Right cardiac atrium (tissue), 5 donors: ENCODE measurements at regions of chr3 and their contacts with region 1.

Region 1: DNA sequence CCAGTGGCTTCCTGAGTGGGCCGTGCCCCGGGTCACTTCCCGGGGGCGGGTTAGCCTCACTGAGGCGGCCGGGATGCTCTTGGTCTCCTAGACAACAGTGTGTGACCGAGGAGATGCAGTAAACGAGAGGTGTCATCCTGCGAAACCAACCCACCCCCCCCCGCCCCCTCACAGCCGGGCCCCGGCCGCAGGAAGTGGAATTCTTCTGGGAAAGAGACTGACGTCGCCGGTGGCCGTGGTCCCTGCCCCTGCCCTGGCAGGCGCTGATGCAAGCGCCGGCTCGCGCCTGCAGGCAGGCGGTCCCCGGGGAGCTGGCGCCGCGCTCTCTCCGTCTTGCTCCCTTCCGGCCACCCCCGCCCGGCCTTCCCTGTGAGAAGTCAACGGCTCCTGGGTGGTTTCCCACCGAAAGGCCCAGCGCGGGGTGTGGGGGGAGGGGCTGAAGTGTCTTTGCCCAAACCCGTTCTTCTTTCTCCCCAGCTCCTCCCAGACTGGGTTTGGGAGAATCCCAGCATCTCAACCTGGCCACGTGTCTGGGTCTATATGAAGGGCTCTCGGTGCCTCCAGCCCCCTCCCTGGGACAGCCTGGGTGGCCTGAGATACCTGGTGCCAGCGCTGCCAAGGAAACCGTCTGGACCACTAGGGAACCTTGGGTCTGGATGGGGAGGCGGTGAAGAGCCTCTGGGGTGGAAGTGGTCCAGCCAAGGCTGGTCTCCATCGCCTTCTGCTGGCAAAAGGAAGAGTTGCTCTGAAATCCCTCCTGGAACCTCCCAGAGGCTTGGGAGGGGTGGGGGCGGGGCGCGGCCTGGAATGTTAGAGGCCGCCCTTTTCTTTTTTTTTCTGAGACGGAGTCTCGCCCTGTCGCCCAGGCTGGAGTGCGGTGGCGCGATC is 47.3 kb downstream of the BHLHE40 start:
- DNase-seq: peak; percentile 97
- ATAC-seq: peak; percentile 94 to 95
- H3K4me3 ChIP-seq: peak overlapping the region; percentile 39
- H3K27ac ChIP-seq: peak overlapping the region; percentile 90
- H3K4me1 ChIP-seq: no peaks in the 10 kb centered on the region
- H3K27me3 ChIP-seq: no peaks in the 10 kb centered on the region

Region 2: GRCh38 chr3:4712143-4712542 is 314.4 kb before region 1 on chr3:
- intact Hi-C with region 1: loop called in 2 of 4 experiments (anchors 5 to 10 kb)
- DNase-seq: no peak
- ATAC-seq: peak in 1 of 2 donors; percentile 13
- H3K4me3 ChIP-seq: no peak overlapping the region
- H3K27ac ChIP-seq: no peak overlapping the region
- H3K4me1 ChIP-seq: no peaks in the 10 kb centered on the region
- H3K27me3 ChIP-seq: no peaks in the 10 kb centered on the region

Region 3: DNA sequence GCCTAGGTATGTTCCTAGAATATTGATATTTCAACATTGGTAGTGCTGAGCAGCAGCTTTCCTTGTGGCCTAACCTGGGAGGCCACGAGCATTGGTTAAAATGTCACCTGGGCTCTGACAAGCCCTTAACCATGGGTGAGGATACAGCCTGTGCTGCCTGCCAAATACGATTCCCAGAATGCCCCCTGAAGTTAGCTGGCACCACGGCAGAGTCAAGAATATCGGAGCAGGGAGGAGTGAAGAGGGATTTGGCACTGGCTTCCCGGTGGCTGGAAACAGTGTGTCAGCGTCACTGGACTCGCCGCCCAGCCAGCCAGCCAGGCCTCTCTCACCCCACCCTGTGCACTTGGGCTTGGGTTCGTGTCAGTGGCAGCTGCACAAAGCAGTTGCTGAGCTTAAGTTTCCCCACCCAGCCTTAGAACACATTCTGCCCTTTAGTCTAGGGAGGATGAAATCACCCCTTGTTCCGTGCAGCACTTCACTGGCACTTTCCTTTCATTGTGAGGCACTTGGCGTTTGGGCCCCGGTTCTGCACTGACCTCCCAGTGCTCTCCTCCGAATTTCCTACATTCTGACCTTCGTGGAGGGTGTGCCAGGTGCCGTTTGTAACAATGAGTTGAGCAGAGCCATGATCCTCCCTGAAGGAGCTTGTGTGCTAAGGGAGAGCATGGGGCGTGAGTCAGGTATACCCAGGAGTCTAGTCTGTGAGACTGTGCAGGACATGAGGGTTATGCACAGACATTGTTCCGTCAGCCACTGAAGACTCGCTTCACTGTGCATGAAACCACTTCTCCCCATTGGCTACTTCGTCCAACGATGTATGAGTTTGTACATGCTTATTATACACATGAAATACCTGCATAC is 200.1 kb before region 1 on chr3:
- intact Hi-C with region 1: loop called in 1 of 4 experiments (anchors 10 kb)
- DNase-seq: peak; percentile 94 to 95 (median 95)
- ATAC-seq: peak; percentile 92 to 93
- H3K4me3 ChIP-seq: no peak overlapping the region
- H3K27ac ChIP-seq: peak overlapping the region; percentile 76
- H3K4me1 ChIP-seq: peaks cover 23% of the 10 kb centered on the region
- H3K27me3 ChIP-seq: no peaks in the 10 kb centered on the region

Region 4: DNA sequence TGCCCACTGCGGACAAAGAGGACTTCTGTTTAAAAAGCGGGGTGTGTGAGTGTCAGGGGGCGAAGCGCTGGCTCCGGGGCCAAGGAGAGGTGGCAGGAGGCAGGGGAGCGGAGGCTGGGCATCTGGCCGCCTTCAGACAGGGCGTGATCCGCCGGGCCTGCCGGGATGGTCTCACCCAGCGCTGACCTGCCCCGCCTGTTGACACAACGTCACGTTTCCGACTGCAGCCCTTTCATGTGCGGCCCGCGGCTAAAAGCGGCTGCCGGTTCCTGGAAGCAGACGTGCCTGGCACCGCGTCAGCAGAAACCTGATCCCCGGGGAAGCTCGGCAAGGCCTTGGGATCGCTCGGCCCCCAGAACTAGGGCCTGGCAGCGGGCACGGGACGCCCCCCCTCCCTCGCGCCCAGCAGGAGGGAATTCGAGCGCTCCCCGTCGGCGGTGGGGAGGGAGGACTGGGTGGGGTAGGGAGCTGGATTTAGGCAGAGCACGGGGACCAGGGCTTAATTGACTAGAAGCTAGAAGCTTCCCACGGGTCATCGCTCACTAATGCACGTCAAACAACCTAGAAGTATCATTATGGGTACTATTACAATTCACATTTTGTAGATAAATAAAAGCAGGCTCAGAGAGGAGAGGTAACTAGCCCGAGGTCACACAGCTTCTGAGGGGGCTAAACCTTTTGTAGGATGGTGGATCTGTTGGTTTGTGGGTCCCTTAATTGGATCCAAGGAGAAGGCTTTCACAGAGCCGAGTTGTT is 39.6 kb before region 1 on chr3:
- intact Hi-C with region 1: loop called in 3 of 4 experiments (anchors 5 kb)
- DNase-seq: peak; percentile 98 to 99 (median 98)
- ATAC-seq: peak; percentile 93
- H3K4me3 ChIP-seq: peak overlapping the region; percentile 17
- H3K27ac ChIP-seq: peak overlapping the region; percentile 96
- H3K4me1 ChIP-seq: peaks cover 7% of the 10 kb centered on the region
- H3K27me3 ChIP-seq: no peaks in the 10 kb centered on the region

Region 5: DNA sequence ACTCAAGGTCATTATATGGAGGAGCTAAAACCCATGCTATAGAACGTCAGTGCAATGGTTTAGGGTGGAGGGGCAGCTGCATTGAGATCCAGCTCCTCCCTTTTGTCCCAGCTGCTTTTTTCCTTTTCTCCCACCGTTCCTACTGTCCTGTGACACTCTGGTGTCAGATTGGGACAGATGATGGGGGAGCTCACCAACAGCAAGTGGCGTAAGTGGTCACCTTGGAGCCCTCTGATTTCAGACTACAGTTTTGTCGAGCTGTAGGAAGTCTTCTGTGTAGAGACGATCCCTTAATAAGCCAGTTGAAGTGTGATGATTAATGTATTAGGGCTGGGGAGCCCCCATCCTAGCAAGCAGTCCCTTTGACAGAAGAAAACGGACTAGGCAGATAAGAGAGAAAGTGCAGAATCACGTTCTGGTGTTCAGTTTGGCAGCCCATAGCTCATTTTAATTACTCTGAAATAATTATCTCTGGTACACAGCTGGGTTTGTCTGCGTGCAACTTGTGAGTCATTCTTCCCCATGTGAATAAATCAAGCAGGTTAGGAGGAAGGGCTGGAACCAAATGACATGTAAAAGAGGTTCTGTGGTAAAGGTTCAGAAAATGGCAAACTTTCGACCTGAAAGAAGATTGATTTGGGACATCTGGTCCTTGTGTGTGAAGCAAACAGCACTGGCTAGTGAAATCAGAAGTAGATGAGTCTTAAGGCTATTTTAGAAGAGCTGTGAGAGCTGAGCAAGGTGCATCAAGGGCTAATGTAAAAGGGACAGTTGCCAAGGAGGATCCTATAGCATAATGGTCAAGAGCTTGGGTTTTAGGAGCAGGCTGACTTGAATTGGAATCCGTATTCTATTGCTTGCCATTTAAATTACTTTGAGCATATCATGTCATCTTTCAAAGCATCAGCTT is 402.3 kb after region 1 on chr3:
- intact Hi-C with region 1: no loop called
- DNase-seq: no peak
- ATAC-seq: no peak
- H3K4me3 ChIP-seq: no peak overlapping the region
- H3K27ac ChIP-seq: no peak overlapping the region
- H3K4me1 ChIP-seq: no peaks in the 10 kb centered on the region
- H3K27me3 ChIP-seq: no peaks in the 10 kb centered on the region